Activated CD8-positive, alpha-beta T cell treated with anti-CD3 and anti-CD28 coated beads for 36 hours (primary cell): ENCODE measurements at regions of chr20 and their contacts with region 1.

Region 1: GRCh38 chr20:2217857-2218539 is 77.8 kb upstream of the TGM3 start:
- DNase-seq: no peak
- ATAC-seq: no peak
- H3K4me3 Mint-ChIP-seq: no peak overlapping the region
- H3K27ac Mint-ChIP-seq: no peak overlapping the region
- H3K4me1 Mint-ChIP-seq: peaks cover 8% of the 10 kb centered on the region
- H3K27me3 Mint-ChIP-seq: peaks cover 7% of the 10 kb centered on the region
- CTCF ChIP-seq: no peak

Region 2: DNA sequence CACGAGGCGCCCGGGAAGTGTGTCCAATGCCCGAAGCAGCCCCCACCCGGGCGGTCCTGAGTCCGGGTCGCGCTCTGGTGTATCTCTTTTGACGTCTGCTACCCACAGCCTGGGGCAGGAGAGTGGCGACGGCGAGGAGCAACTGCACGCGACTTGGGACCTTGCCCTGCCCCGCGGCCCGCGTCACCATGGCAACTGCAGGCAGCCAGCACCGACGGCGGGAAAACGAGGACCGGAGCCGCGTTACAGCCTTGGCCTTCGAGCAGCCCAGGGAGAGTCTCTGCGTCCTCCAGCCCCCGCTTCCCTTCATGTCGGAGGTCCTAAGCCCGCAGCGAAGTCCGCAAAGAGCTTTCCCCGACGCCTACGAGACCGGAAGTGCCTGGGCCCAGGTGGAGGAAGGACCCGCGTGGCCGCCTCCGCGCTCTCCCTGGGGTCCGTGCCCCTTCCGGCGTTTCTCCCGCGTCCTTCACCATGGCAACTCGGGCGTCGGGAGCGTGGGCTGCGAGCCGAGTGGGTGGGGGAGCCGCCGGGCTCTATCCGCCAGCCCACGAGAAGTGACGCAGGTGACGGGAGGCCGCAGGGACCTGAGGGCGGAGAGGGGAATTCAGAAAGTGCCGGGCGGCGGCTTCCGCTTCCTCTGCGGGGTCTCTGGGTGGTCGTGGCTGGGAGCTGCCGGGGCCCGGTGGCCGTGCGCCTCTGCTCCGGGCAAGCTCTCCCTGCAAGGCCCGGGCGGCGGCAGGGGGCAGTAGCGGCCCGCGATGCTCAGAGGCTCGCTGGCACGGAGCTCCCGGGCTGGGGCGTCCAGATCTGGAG is 10.8 kb before region 1 on chr20:
- CTCF ChIA-PET with region 1: interaction called, 11 read pairs
- POLR2A ChIA-PET with region 1: no interaction called
- intact Hi-C with region 1: no loop called
- DNase-seq: peak; percentile 86
- ATAC-seq: peak; percentile 81
- H3K4me3 Mint-ChIP-seq: peak overlapping the region; percentile 72
- H3K27ac Mint-ChIP-seq: peak overlapping the region; percentile 23
- H3K4me1 Mint-ChIP-seq: peaks cover 8% of the 10 kb centered on the region
- H3K27me3 Mint-ChIP-seq: peaks cover 13% of the 10 kb centered on the region
- CTCF ChIP-seq: peak; percentile 73